Activated T-helper 1 cell treated with anti-CD3 and anti-CD28 coated beads, Interleukin-12 subunit alpha, Interleukin-12 subunit beta, Interleukin-2, Interleukin-4 antibody, amounts not matched to agents 30 ng/mL and 10 ng/mL and 1 ng/mL, durations not matched to agents 14 hours and 24 hours and 36 hours (primary cell): ENCODE measurements at regions of chr5 and their contacts with region 1.

Region 1: GRCh38 chr5:134041570-134042411 is 37.0 kb upstream of the VDAC1 start:
- DNase-seq: no peak
- H3K4me3 Mint-ChIP-seq: no peak overlapping the region
- H3K27ac Mint-ChIP-seq: no peak overlapping the region
- H3K4me1 Mint-ChIP-seq: peaks cover 16% of the 10 kb centered on the region
- H3K27me3 Mint-ChIP-seq: peaks cover 11% of the 10 kb centered on the region

Region 2: GRCh38 chr5:134086943-134087305 is 45.1 kb after region 1 on chr5:
- intact Hi-C with region 1: loop called (anchors 1 kb)
- DNase-seq: peak; percentile 62
- H3K4me3 Mint-ChIP-seq: peak overlapping the region; percentile 66
- H3K27ac Mint-ChIP-seq: peak overlapping the region; percentile 90
- H3K4me1 Mint-ChIP-seq: peaks cover 67% of the 10 kb centered on the region
- H3K27me3 Mint-ChIP-seq: peaks cover 27% of the 10 kb centered on the region

Region 3: DNA sequence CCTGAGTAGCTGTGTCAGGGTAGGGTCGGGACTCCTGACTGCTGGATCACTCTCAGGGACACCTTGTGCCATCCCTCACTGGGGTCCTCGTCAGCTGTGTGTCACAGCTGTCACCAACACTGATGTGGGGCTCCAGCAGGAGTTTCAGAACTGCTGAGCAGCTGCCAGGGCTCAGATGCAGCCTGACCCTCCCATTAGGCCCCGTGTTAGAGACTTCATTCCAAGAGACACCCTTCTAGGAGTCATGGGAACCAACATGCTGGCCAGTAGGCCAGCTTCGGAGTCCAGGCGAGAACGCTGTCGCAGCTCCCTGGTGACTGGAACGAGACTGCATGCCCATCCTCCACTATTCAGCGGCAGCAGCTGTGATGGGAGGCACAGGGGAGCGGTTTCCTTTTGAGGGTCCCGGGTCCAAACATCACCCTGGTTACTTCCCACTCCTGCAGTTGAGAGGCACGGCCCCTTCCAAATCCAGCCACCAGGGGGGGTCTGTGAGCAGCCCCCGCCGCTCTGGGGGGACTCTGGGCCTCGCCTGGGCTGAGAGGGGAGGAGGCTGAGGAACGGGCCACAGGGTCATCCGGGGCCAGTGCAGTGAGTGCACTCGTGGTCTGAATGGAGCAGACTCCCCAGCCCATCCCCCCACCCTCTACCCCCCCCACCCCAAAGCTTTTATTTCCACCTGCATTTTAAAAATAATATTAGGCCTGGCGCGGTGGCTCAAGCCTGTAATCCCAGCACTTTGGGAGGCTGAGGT is 60.1 kb after region 1 on chr5:
- intact Hi-C with region 1: loop called (anchors 1 kb)
- DNase-seq: peak; percentile 58
- H3K4me3 Mint-ChIP-seq: peak overlapping the region; percentile 26
- H3K27ac Mint-ChIP-seq: no peak overlapping the region
- H3K4me1 Mint-ChIP-seq: peaks cover 59% of the 10 kb centered on the region
- H3K27me3 Mint-ChIP-seq: peaks cover 36% of the 10 kb centered on the region

Region 4: GRCh38 chr5:134113902-134114875 is 72.4 kb after region 1 on chr5 and contains the start of gene TCF7:
- intact Hi-C with region 1: loop called (anchors 1 kb)
- DNase-seq: peak; percentile 66
- H3K4me3 Mint-ChIP-seq: peak within 1 kb of the TSS; percentile 83
- H3K27ac Mint-ChIP-seq: peak within 1 kb of the TSS; percentile 87
- H3K4me1 Mint-ChIP-seq: peaks cover 71% of the 10 kb centered on the region
- H3K27me3 Mint-ChIP-seq: peaks cover 30% of the 10 kb centered on the region
- total RNA-seq, gene TCF7: 76.3 and 77.2 TPM in 2 replicates

Region 5: DNA sequence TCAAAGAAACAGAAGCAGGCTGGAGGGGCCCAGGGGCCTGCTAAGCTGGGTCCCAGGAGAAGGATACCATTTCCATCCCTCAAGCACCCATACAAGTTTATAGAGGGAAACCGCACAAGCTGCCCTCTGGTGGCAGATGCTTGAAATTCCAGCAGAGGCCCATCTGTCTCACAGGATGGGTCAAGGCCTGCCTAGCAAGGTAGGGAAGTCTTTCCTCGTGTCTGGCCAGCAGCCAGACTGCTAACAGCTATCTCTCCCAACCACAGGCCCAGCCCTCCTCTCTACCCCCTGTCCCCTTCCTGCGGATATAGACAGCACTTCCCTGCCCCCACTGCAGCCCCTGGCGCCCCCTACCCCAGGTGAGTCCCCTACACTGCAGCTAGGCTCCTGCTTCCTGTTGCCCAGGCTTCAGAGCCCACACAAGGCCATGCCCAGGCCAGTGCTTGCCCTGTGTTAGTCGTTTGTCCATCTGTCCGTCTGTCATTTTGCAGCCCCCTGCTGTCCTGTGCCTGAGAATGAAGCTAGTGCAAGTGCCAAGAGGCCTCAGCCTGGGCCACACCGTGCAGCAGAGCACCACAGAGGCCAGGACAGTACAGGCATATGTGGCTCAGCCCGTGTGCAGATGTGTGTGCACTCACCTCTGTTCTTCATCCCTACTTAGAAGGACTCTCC is 98.9 kb after region 1 on chr5:
- intact Hi-C with region 1: loop called (anchors 1 kb)
- DNase-seq: peak; percentile 43
- H3K4me3 Mint-ChIP-seq: no peak overlapping the region
- H3K27ac Mint-ChIP-seq: no peak overlapping the region
- H3K4me1 Mint-ChIP-seq: peaks cover 65% of the 10 kb centered on the region
- H3K27me3 Mint-ChIP-seq: peaks cover 4% of the 10 kb centered on the region

Region 6: DNA sequence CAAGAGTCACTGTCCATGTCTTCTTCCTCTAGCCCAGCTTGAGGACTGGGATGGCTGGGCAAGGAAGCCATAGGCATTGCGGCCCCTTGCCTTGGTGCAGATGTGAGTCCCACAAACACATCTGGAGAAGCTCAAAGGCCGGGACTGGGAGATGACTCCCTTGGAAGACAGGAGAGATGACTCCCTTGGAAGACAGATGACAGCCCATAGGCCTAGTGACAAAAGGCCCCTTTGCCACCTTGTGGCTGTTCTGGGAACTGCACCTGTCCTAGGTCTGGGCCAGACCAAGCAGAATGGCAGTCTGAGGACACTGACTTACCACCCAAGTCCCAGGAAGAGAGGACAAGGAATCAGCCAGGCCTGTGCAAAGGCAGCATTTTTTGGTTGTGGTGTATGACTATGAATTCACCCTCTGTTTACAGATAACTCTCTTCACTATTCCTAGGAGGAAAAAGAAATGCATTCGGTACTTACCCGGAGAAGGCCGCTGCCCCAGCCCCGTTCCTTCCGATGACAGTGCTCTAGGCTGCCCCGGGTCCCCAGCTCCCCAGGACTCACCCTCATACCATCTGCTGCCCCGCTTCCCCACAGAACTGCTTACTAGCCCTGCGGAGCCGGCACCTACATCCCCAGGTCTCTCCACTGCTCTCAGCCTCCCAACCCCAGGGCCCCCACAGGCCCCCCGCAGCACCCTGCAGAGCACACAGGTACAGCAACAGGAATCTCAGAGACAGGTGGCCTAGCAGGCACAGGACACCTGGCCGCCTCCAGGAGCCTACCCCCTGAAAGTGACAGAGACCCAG is 104.2 kb after region 1 on chr5:
- intact Hi-C with region 1: loop called (anchors 1 kb)
- DNase-seq: peak; percentile 67
- H3K4me3 Mint-ChIP-seq: no peak overlapping the region
- H3K27ac Mint-ChIP-seq: peak overlapping the region; percentile 19
- H3K4me1 Mint-ChIP-seq: peaks cover 36% of the 10 kb centered on the region
- H3K27me3 Mint-ChIP-seq: no peaks in the 10 kb centered on the region

Region 7: GRCh38 chr5:134289509-134290113 is 247.8 kb after region 1 on chr5:
- intact Hi-C with region 1: loop called (anchors 1 kb)
- DNase-seq: peak; percentile 3
- H3K4me3 Mint-ChIP-seq: no peak overlapping the region
- H3K27ac Mint-ChIP-seq: no peak overlapping the region
- H3K4me1 Mint-ChIP-seq: no peaks in the 10 kb centered on the region
- H3K27me3 Mint-ChIP-seq: peaks cover 8% of the 10 kb centered on the region